Vagina (tissue), 2 donors: ENCODE measurements at regions of chr1 and their contacts with region 1.

Region 1: GRCh38 chr1:156456622-156457465 is 43.7 kb downstream of the MEF2D start:
- DNase-seq: peak; percentile 99
- H3K4me3 ChIP-seq: peak overlapping the region; percentile 51 to 77
- H3K27ac ChIP-seq: peak overlapping the region; percentile 99
- H3K4me1 ChIP-seq: peaks cover 13% of the 10 kb centered on the region
- H3K27me3 ChIP-seq: no peaks in the 10 kb centered on the region
- CTCF ChIP-seq: no peak
- POLR2A ChIP-seq: peak in 1 of 2 donors; percentile 91

Region 2: GRCh38 chr1:156500797-156501499 is 44.1 kb after region 1 on chr1:
- intact Hi-C with region 1: loop called (anchors 2 kb)
- DNase-seq: peak in 1 of 2 donors; percentile 99
- H3K4me3 ChIP-seq: peak overlapping the region; percentile 84 to 96
- H3K27ac ChIP-seq: peak overlapping the region; percentile 99
- H3K4me1 ChIP-seq: peaks cover 74% of the 10 kb centered on the region
- H3K27me3 ChIP-seq: no peaks in the 10 kb centered on the region
- CTCF ChIP-seq: peak in 1 of 3 experiments; percentile 45
- POLR2A ChIP-seq: peak; percentile 4 to 92

Region 3: GRCh38 chr1:156608036-156608674 is 151.3 kb after region 1 on chr1:
- intact Hi-C with region 1: loop called (anchors 5 kb)
- DNase-seq: no peak
- H3K4me3 ChIP-seq: no peak overlapping the region
- H3K27ac ChIP-seq: no peak overlapping the region
- H3K4me1 ChIP-seq: no peaks in the 10 kb centered on the region
- H3K27me3 ChIP-seq: no peaks in the 10 kb centered on the region
- CTCF ChIP-seq: peak; percentile 50 to 82 (median 70)
- POLR2A ChIP-seq: no peak